Activated naive CD8-positive, alpha-beta T cell treated with anti-CD3 and anti-CD28 coated beads, Interleukin-2, amount 10 ng/mL, durations not matched to agents 7 days and 5 days (primary cell): ENCODE measurements at regions of chr6 and their contacts with region 1.

Region 1: DNA sequence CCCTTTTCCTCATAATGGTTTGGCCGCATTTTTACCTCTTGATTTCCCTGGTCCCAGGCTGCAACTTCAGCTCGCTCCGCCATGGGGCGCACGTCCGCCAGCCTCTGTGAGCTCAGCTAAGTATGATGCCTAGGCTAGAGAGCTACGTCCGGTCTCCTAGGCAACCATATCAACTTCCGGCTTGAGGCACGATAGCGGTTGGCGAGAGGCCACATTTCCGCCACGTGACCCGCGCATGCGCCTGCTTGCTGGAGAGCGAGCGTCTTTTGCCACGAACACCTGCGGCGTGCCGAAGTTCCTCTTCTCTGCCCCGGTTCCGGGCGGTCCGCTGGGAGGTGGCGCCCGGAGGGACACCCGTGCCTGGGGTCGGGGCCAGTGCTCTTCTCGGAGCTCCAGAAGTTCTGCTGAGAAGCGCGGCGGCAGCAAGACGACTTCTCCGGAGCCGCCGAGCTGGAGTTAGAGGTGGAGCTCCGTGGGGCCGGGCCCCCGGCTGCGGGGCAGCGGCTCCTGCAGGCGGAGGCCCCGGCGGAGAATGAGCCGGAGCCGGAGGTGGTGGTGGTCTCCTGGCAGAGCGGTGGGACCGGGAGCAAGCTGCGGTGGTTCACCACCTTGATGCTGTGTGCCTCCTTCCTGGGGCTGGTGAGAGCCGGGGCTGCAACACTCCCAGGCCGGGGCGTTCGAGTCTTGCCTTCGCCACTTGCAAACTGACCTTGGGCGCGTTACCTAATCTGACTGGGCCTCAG is 172.0 kb downstream of the SLC16A10 start:
- DNase-seq: peak; percentile 98
- ATAC-seq: peak; percentile 95
- H3K4me3 Mint-ChIP-seq: peak overlapping the region; percentile 62
- H3K27ac Mint-ChIP-seq: peak overlapping the region; percentile 88
- H3K4me1 Mint-ChIP-seq: peaks cover 28% of the 10 kb centered on the region
- H3K27me3 Mint-ChIP-seq: peaks cover 17% of the 10 kb centered on the region

Region 2: GRCh38 chr6:111478749-111479148 is 219.5 kb after region 1 on chr6:
- POLR2A ChIA-PET with region 1: interaction called, 50 read pairs
- DNase-seq: no peak
- ATAC-seq: no peak
- H3K4me3 Mint-ChIP-seq: no peak overlapping the region
- H3K27ac Mint-ChIP-seq: peak overlapping the region; percentile 15
- H3K4me1 Mint-ChIP-seq: peaks cover 25% of the 10 kb centered on the region
- H3K27me3 Mint-ChIP-seq: no peaks in the 10 kb centered on the region

Region 3: DNA sequence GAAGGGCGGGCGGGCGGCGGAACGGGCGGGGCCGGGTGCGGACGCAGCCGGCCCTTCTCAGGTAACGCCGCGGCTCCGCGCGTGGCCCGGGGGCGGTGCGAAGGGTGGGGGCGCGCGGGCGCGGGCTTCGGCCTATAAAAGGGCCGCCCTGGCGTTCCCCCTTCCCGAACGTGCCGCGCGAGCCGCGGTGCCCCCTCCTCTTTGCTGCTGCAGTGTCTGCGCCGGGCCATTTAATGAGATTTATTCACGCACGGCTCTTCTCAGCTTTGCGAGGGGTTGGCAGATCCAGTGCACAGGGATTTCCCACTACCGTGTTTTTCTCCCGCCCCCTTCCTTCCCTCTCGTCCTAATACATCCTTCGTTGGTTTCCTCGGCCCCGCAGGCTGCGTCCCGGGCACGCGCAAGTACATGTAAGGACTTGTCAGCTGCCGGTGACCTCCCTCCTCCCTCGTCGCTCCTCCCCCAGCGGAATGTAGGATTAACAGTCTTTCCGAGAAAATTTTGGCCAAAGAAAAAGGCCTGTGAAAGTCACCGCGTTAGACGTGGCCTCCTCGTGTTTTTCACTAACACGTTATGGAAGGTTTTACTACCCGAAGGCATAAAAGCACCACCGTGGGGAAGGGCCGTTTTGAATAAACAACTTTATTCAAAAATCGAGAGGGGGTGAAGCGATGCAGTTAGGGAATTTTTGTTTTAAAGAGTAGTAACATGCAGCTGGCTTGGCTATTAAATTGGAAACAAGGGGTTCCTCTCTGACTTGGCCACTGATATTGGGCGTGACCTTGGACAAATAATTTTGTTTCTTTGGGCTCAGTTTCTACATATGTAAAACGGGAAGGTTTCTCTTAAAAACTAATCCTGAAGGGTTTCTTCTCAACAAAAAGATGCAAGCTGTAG is 224.7 kb after region 1 on chr6:
- POLR2A ChIA-PET with region 1: interaction called, 50 read pairs
- DNase-seq: no peak
- ATAC-seq: peak; percentile 60
- H3K4me3 Mint-ChIP-seq: peak overlapping the region; percentile 96
- H3K27ac Mint-ChIP-seq: peak overlapping the region; percentile 100
- H3K4me1 Mint-ChIP-seq: peaks cover 44% of the 10 kb centered on the region
- H3K27me3 Mint-ChIP-seq: no peaks in the 10 kb centered on the region

Region 4: GRCh38 chr6:111605100-111605751 is 346.0 kb after region 1 on chr6:
- POLR2A ChIA-PET with region 1: interaction called, 26 read pairs
- DNase-seq: peak; percentile 37
- ATAC-seq: peak; percentile 53
- H3K4me3 Mint-ChIP-seq: peak overlapping the region; percentile 88
- H3K27ac Mint-ChIP-seq: peak overlapping the region; percentile 91
- H3K4me1 Mint-ChIP-seq: peaks cover 27% of the 10 kb centered on the region
- H3K27me3 Mint-ChIP-seq: no peaks in the 10 kb centered on the region

Region 5: DNA sequence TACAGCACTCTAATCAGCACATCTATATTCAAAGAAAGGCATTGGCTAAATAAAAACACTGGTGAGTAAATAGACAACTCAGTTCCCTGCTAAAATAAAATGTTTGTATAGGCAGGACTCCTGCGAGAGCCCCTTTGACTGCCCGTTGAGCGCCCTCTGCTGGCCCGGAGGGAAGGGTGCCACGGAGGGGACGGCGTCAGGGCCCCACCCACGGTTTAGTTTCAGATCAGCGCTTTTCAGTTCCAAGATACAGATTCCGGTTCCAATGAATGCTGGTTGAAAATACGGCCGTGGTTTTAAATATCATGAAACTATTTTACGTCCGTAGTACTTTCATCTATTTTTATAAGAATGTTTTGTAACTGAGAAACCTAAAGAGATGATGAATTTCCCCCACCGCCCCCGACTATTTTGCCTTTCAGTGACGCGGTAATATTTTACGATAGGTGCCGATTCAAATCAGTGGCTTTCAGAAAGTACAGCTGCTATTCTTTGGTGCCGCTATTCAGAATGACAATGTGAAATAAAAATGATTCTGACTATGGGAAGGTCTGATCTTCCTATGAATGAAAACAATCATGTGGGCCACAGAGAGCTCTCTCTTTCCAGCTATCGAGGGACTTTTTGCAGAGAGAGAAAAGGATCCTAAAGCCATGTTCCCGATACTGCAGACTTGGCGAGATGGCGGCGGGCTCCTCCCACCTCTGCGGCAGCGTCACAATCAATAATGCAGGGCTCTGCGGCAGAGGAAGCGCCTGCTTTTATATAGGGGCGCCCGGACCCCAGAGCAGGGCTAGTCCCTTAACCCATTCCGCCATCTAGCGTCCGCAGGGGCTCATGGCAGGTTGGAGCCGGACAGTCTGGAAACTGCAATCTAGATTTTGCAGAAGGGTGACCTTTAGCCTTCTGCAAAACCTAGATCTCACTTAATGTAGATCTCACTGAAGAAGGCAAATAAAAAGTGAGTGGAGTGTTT is 784.1 kb after region 1 on chr6:
- POLR2A ChIA-PET with region 1: interaction called, 10 read pairs
- DNase-seq: peak; percentile 91
- ATAC-seq: peak; percentile 98
- H3K4me3 Mint-ChIP-seq: peak overlapping the region; percentile 97
- H3K27ac Mint-ChIP-seq: peak overlapping the region; percentile 99
- H3K4me1 Mint-ChIP-seq: peaks cover 13% of the 10 kb centered on the region
- H3K27me3 Mint-ChIP-seq: no peaks in the 10 kb centered on the region